Mammary epithelial cell (primary cell): ENCODE measurements at regions of chrX and their contacts with region 1.

Region 1: DNA sequence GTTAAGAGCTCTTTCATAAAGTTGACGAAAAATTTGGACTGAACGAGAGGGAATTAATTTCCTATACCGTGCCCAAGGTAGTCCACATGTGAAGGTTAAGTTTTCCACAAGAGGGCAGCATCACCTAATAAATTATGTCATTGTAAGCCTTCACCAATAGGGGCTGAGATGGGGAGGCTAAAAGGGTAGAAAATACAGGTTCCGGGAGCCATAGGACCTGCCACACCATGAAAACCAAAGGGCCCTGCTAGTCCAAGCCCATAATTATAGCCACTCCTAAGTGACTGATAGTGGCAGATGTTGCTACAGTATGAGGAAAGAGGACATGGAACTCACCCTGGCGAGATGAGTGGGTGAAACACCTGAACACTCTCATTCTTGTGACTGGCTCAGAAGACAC is 122.2 kb downstream of the SHROOM4 start:
- DNase-seq: peak; percentile 27
- H3K4me3 ChIP-seq: no peak overlapping the region
- H3K27ac ChIP-seq: no peak overlapping the region
- H3K4me1 ChIP-seq: no peaks in the 10 kb centered on the region
- H3K27me3 ChIP-seq: peaks cover 4% of the 10 kb centered on the region
- CTCF ChIP-seq: peak; percentile 66 to 69

Region 2: GRCh38 chrX:50618788-50619558 is 72.8 kb before region 1 on chrX:
- CTCF ChIA-PET with region 1: no interaction called
- dilution Hi-C with region 1: no loop called
- in situ Hi-C with region 1: no loop called
- intact Hi-C with region 1: no loop called
- DNase-seq: peak; percentile 32
- H3K4me3 ChIP-seq: no peak overlapping the region
- H3K27ac ChIP-seq: no peak overlapping the region
- H3K4me1 ChIP-seq: no peaks in the 10 kb centered on the region
- H3K27me3 ChIP-seq: no peaks in the 10 kb centered on the region
- CTCF ChIP-seq: no peak

Region 3: GRCh38 chrX:50721445-50722142 is 29.8 kb after region 1 on chrX:
- CTCF ChIA-PET with region 1: no interaction called
- dilution Hi-C with region 1: no loop called
- in situ Hi-C with region 1: no loop called
- intact Hi-C with region 1: no loop called
- DNase-seq: no peak
- H3K4me3 ChIP-seq: no peak overlapping the region
- H3K27ac ChIP-seq: no peak overlapping the region
- H3K4me1 ChIP-seq: no peaks in the 10 kb centered on the region
- H3K27me3 ChIP-seq: peaks cover 2% of the 10 kb centered on the region
- CTCF ChIP-seq: no peak

Region 4: GRCh38 chrX:50905334-50905733 is 213.5 kb after region 1 on chrX:
- CTCF ChIA-PET with region 1: no interaction called
- dilution Hi-C with region 1: no loop called
- in situ Hi-C with region 1: no loop called
- intact Hi-C with region 1: loop called (anchors 1 kb)
- DNase-seq: peak; percentile 11
- H3K4me3 ChIP-seq: no peak overlapping the region
- H3K27ac ChIP-seq: no peak overlapping the region
- H3K4me1 ChIP-seq: no peaks in the 10 kb centered on the region
- H3K27me3 ChIP-seq: peaks cover 2% of the 10 kb centered on the region
- CTCF ChIP-seq: peak; percentile 43 to 58

Region 5: GRCh38 chrX:50920132-50920531 is 228.3 kb after region 1 on chrX:
- CTCF ChIA-PET with region 1: no interaction called
- dilution Hi-C with region 1: no loop called
- in situ Hi-C with region 1: no loop called
- intact Hi-C with region 1: loop called (anchors 5 kb)
- DNase-seq: peak; percentile 23
- H3K4me3 ChIP-seq: no peak overlapping the region
- H3K27ac ChIP-seq: no peak overlapping the region
- H3K4me1 ChIP-seq: no peaks in the 10 kb centered on the region
- H3K27me3 ChIP-seq: no peaks in the 10 kb centered on the region
- CTCF ChIP-seq: peak; percentile 57 to 62

Region 6: GRCh38 chrX:50988649-50989048 is 296.8 kb after region 1 on chrX:
- CTCF ChIA-PET with region 1: no interaction called
- dilution Hi-C with region 1: no loop called
- in situ Hi-C with region 1: no loop called
- intact Hi-C with region 1: loop called (anchors 2 kb)
- DNase-seq: peak; percentile 28
- H3K4me3 ChIP-seq: no peak overlapping the region
- H3K27ac ChIP-seq: no peak overlapping the region
- H3K4me1 ChIP-seq: no peaks in the 10 kb centered on the region
- H3K27me3 ChIP-seq: peaks cover 3% of the 10 kb centered on the region
- CTCF ChIP-seq: peak; percentile 60 to 67

Region 7: GRCh38 chrX:51461053-51462044 is 769.5 kb after region 1 on chrX:
- CTCF ChIA-PET with region 1: no interaction called
- dilution Hi-C with region 1: no loop called
- in situ Hi-C with region 1: loop called in 1 of 2 experiments (anchors 25 kb)
- intact Hi-C with region 1: loop called (anchors 10 kb)
- DNase-seq: peak; percentile 16
- H3K4me3 ChIP-seq: no peak overlapping the region
- H3K27ac ChIP-seq: no peak overlapping the region
- H3K4me1 ChIP-seq: no peaks in the 10 kb centered on the region
- H3K27me3 ChIP-seq: no peaks in the 10 kb centered on the region
- CTCF ChIP-seq: peak; percentile 76 to 84

Region 8: GRCh38 chrX:52261463-52262194 is 1569.8 kb after region 1 on chrX:
- CTCF ChIA-PET with region 1: no interaction called
- dilution Hi-C with region 1: no loop called
- in situ Hi-C with region 1: no loop called
- intact Hi-C with region 1: loop called (anchors 10 kb)
- DNase-seq: peak; percentile 80
- H3K4me3 ChIP-seq: peak overlapping the region; percentile 61 to 68 (median 67)
- H3K27ac ChIP-seq: peak overlapping the region; percentile 46
- H3K4me1 ChIP-seq: peaks cover 11% of the 10 kb centered on the region
- H3K27me3 ChIP-seq: no peaks in the 10 kb centered on the region
- CTCF ChIP-seq: peak; percentile 91 to 92